ENCODE measurements at regions of chr1 and their contacts with region 1.

Region 1: DNA sequence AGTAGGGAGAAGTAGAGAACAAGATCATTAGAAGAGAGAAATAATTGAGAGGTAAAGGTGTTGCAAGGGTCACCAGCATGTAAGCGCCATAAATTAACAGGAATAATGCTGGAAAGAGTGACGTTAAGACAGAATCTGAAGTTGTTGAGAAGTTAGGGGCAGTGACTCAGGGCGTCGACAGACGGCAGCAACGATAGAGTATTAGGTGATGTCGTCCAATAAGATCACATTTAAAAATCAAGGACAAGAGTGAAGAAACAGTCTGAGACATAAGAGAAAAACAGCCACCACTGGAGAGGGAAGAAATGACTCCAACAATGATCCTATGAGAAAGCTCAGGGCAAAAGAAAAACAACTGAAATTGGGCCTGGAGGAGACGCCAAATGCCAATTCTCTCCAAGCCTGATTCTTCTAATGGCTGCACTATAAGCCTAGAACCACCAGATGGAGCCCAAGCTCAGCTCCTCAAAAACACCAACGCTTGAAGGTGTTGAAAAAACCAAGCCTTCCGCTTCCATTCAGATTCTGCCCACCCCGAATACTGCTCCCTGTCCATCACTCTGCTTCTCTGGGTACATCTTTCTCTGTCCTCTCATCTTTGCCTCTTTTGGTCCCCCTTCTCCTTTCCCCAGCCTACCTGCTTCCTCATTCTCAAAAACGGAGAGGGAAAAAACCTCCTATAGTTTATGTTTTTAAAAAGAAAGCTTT is 70.0 kb downstream of the LUZP1 start:
- H3K4me3 Mint-ChIP-seq: no peak overlapping the region
- H3K27ac Mint-ChIP-seq: no peak overlapping the region
- H3K4me1 Mint-ChIP-seq: peaks cover 42% of the 10 kb centered on the region
- H3K27me3 Mint-ChIP-seq: no peaks in the 10 kb centered on the region

Region 2: GRCh38 chr1:22876359-22877111 is 222.1 kb before region 1 on chr1:
- intact Hi-C with region 1: no loop called
- H3K4me3 Mint-ChIP-seq: no peak overlapping the region
- H3K27ac Mint-ChIP-seq: no peak overlapping the region
- H3K4me1 Mint-ChIP-seq: no peaks in the 10 kb centered on the region
- H3K27me3 Mint-ChIP-seq: peaks cover 1% of the 10 kb centered on the region

Region 3: GRCh38 chr1:22976461-22977243 is 122.0 kb before region 1 on chr1:
- intact Hi-C with region 1: loop called (anchors 1 kb)
- H3K4me3 Mint-ChIP-seq: no peak overlapping the region
- H3K27ac Mint-ChIP-seq: no peak overlapping the region
- H3K4me1 Mint-ChIP-seq: peaks cover 8% of the 10 kb centered on the region
- H3K27me3 Mint-ChIP-seq: peaks cover 24% of the 10 kb centered on the region

Region 4: DNA sequence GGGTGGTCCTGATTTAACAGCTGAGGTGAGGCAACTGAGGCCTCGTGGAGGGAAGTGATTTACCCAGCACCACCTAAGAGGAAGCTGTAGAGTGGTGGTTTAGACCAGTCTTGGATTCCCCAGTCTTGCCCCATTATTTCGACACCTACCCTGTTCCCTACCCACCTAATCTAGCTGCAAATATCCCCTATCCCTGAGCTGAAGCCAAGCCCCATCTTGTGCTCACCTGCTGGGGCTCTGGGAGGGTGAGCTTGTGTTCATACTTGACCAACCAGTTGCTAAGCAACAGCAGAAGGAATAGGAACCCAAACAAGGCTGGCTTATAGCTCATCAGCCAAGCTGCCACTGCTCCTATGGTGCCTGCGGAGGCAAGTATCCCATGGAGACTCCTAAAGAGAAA is 85.0 kb before region 1 on chr1:
- intact Hi-C with region 1: no loop called
- H3K4me3 Mint-ChIP-seq: no peak overlapping the region
- H3K27ac Mint-ChIP-seq: no peak overlapping the region
- H3K4me1 Mint-ChIP-seq: peaks cover 32% of the 10 kb centered on the region
- H3K27me3 Mint-ChIP-seq: no peaks in the 10 kb centered on the region

Region 5: GRCh38 chr1:23184212-23184934 is 85.8 kb after region 1 on chr1:
- intact Hi-C with region 1: loop called (anchors 1 kb)
- H3K4me3 Mint-ChIP-seq: peak overlapping the region; percentile 37
- H3K27ac Mint-ChIP-seq: no peak overlapping the region
- H3K4me1 Mint-ChIP-seq: peaks cover 10% of the 10 kb centered on the region
- H3K27me3 Mint-ChIP-seq: peaks cover 21% of the 10 kb centered on the region

Region 6: DNA sequence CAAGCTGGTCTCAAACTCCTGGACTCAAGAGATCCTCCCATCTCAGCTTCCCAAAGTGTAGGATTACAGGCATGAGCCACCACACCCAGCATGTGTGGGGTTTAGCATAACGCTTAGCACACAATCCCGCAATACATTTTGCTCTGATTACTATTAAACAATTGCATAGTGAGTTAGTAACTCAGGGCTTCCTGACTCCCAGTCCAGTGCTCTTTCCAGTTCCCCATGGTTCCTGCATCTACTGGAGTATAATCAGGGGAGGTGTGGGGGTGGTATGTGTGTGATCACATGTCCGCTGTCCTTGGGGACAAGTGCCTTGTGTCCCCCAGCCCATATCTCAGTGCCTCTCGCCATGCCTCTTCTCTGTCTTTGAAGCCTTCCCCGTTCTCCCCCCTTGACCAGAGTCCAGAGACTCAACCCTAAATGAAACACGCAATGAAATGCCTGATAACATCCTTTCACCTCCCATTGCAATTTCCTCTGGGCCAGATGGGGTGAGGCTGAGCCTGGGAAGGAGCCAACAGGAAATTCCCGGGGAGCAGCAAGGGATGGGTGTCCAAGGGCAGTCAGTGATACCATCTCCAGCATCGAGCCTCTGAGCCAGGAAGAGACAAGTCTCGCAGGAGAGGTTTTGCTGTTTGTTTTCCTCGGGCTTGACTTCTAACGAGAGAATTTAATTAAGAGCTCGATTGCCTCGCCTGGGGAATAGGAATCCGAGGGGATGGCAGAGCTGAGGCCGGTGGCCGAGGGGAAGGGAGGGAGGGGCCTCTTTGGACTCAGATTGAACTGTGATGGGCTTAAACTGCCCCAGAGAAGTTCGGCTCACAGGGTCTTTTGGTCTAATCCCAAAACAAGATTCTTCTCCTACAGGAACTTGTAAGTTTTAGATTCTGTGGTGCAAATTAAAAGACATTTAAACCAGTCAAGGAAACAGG is 126.4 kb after region 1 on chr1:
- intact Hi-C with region 1: no loop called
- H3K4me3 Mint-ChIP-seq: no peak overlapping the region
- H3K27ac Mint-ChIP-seq: no peak overlapping the region
- H3K4me1 Mint-ChIP-seq: peaks cover 5% of the 10 kb centered on the region
- H3K27me3 Mint-ChIP-seq: peaks cover 38% of the 10 kb centered on the region

Region 7: GRCh38 chr1:23273450-23274133 is 175.0 kb after region 1 on chr1:
- intact Hi-C with region 1: loop called (anchors 5 kb)
- H3K4me3 Mint-ChIP-seq: no peak overlapping the region
- H3K27ac Mint-ChIP-seq: no peak overlapping the region
- H3K4me1 Mint-ChIP-seq: peaks cover 1% of the 10 kb centered on the region
- H3K27me3 Mint-ChIP-seq: peaks cover 21% of the 10 kb centered on the region

Region 8: GRCh38 chr1:23282957-23283356 is 184.3 kb after region 1 on chr1:
- intact Hi-C with region 1: loop called (anchors 5 kb)
- H3K4me3 Mint-ChIP-seq: no peak overlapping the region
- H3K27ac Mint-ChIP-seq: peak overlapping the region; percentile 76
- H3K4me1 Mint-ChIP-seq: peaks cover 53% of the 10 kb centered on the region
- H3K27me3 Mint-ChIP-seq: no peaks in the 10 kb centered on the region

Measured in dendritic cell treated with granulocyte-macrophage colony-stimulating factor and Interleukin-4, amounts not matched to agents 40 ng/mL and 50 ng/mL, for 4 days (primary cell).